Gastrocnemius medialis (tissue), 4 donors: ENCODE measurements at regions of chr6 and their contacts with region 1.

Region 1: GRCh38 chr6:128882991-128883611 is at the start of gene LAMA2:
- DNase-seq: peak; percentile 75 to 86
- ATAC-seq: peak; percentile 89 to 93
- H3K4me3 ChIP-seq: peak within 1 kb of the TSS; percentile 66 to 83 (median 76)
- H3K27ac ChIP-seq: peak within 1 kb of the TSS; percentile 76 to 85 (median 81)
- H3K4me1 ChIP-seq: peaks cover 7 to 8% of the 10 kb centered on the region in 2 donors
- H3K27me3 ChIP-seq: no peaks in the 10 kb centered on the region
- CTCF ChIP-seq: peak in 2 of 5 experiments; percentile 21 to 33
- POLR2A ChIP-seq: peak; percentile 55 to 85
- total RNA-seq, gene LAMA2: 52.9 to 113 (median 71.3) TPM

Region 2: DNA sequence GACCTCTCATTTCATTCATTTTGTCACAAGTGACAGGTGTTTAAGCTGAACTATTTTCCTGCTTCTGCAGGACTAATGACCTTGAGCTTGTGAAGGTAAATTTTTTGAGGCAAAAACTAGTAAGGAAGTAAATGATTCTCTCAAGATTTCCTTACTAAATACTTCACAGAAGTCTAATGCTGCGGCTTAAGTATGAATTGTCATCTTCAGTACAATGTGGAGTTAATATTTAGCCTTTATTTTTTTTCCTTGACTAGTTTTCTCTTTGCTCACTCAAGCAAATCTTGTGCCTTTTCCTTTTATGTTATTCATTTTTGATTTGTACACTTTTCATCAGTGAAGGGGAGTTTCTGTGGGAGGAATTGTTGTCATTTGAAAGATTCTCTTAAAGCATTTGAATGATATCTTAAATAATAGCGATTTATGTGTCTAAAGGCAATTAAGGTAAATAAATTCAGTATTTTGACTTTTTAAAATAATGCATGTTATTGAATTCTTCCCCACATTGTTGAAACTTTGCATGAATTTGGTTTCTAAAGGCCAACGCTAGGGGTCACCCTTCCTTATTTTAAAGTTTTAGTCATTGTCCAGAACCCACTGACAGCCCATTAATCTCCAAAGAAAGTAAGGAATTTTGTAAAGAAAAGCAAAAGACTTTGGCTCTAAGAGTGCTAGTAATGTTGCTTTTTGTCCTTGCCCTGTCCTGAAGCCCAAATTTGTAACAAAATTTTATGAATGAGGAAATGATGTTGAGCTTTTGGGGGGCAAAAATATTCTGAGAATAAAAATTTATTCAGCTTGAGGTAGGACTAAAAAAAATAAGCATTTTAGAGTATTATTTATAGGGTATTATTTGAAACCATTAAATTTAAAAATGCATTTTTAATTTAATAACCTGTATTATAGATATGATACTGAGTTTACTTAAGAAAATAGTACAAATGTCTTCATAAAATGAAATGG is 157.5 kb before region 1 on chr6:
- in situ Hi-C with region 1: no loop called
- intact Hi-C with region 1: loop called (anchors 10 kb)
- DNase-seq: no peak
- ATAC-seq: no peak
- H3K4me3 ChIP-seq: no peak overlapping the region
- H3K27ac ChIP-seq: no peak overlapping the region
- H3K4me1 ChIP-seq: no peaks in the 10 kb centered on the region
- H3K27me3 ChIP-seq: no peaks in the 10 kb centered on the region
- CTCF ChIP-seq: peak; percentile 20 to 56 (median 35)
- POLR2A ChIP-seq: no peak

Region 3: GRCh38 chr6:129138739-129139405 is 255.8 kb after region 1 on chr6:
- in situ Hi-C with region 1: no loop called
- intact Hi-C with region 1: loop called (anchors 1 kb)
- DNase-seq: peak; percentile 41 to 48
- ATAC-seq: peak; percentile 80 to 86
- H3K4me3 ChIP-seq: no peak overlapping the region
- H3K27ac ChIP-seq: peak overlapping the region; percentile 66 to 85 (median 72)
- H3K4me1 ChIP-seq: peaks cover 32 to 54% of the 10 kb centered on the region in 2 donors
- H3K27me3 ChIP-seq: no peaks in the 10 kb centered on the region
- CTCF ChIP-seq: no peak
- POLR2A ChIP-seq: peak; percentile 16 to 41